ENCODE measurements at regions of chr2 and their contacts with region 1.

Region 1: DNA sequence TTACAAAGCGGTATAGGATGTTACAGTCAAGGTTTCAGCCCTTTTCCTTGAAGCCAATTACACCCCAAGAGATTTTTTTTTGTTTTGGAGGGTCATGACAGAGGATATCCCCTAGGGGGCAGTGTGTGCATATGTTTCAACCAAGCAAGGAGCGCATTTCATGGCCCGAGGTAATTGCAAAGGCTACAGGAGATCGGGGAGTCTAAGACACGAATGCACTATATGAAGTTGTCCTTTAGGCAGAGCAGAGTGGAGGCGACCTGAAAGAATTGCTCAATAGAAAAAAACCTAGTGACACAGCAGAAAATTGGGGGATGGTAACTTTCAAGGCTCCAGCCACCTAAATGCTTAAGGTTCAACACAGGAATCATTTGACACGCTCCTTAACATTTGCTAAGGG is 219.8 kb upstream of the PARD3B start:
- DNase-seq: peak; percentile 46
- H3K4me3 ChIP-seq: no peak overlapping the region
- CTCF ChIP-seq: peak; percentile 68

Region 2: GRCh38 chr2:204289066-204289465 is 36.4 kb before region 1 on chr2:
- CTCF ChIA-PET with region 1: no interaction called
- POLR2A ChIA-PET with region 1: no interaction called
- DNase-seq: no peak
- H3K4me3 ChIP-seq: no peak overlapping the region
- CTCF ChIP-seq: no peak

Region 3: DNA sequence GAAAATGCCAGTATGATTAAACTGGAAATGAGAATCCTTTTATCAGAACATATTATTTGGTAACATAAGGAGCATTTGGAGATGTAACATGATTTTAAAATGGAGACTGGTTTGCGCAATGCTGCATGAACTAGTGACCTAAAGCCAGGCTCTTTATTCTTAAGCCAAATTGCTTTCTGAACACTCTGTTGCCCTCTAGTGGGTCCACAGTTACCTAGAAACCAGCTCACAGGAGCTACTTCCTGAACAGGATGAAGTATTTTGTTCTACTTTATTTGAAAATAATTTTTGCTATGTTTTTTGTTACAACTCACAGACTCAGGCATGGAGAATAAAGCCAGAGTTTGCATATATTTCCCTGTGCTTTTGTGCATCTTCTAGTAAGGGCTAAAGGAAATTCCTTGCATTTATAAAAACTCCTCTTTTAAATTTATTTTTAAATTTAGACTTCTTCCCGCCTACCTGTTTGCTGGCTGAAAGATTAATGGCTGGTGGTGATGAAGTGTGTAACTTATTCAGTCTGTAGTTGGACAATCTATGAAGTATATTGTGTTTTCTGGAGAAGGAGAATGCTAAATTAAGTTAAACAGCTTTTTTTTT is 366.5 kb after region 1 on chr2:
- CTCF ChIA-PET with region 1: interaction called, 24 read pairs
- POLR2A ChIA-PET with region 1: no interaction called
- DNase-seq: peak; percentile 55
- H3K4me3 ChIP-seq: no peak overlapping the region
- CTCF ChIP-seq: peak; percentile 63